WTC11 (cell line): ENCODE measurements at regions of chr15 and their contacts with region 1.

Region 1: DNA sequence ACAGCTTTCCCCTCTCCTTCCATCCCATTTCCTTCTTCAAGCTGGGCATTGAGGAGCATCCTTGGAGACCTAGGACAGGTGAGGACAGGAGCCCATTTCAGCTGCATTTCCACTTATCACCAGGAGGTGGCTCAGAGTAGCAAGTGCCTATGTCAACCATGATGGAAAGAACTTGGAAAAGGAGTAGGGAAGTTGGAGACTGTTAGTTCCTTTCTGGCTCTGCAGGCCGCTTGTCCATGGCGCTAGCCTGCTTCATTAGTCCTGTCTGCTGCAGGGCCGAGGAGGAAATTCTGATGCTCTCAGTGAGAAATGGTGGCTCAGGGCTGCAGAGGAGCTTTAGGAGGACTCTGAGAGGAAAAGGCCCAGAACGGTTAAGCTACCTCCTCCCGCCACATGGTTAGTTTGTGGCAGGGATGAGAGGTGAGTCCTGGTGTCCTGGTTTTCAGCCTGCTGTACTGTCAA is 7.0 kb upstream of the CD276 start:
- DNase-seq: peak; percentile 78
- ATAC-seq: peak; percentile 92
- H3K4me3 Mint-ChIP-seq: no peak overlapping the region
- H3K27ac Mint-ChIP-seq: no peak overlapping the region
- H3K4me1 Mint-ChIP-seq: peaks cover 12% of the 10 kb centered on the region
- H3K27me3 Mint-ChIP-seq: no peaks in the 10 kb centered on the region; the same call in 1 of the 2 replicates
- CTCF ChIP-seq: peak; percentile 70; the same call in 1 of the 2 replicates

Region 2: DNA sequence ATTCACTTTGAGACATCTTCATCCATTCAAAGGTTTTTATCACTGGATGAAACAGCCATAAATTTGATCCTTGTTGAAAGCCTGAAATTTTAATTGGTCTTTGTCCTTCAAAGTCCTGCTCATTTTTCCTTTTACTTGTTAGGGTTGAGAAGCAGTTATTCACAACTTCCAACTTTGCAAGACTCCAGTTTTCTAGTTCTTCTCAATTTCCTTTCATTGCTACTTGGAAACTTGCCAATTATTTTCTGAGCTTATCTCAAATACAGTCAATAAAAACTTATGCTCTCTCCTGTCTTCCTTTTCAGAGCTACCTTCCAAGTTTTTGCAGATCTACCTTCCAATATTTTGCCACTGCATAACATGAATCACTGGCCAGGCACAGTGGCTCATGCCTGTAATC is 16.7 kb before region 1 on chr15:
- CTCF ChIA-PET with region 1: interaction called, 11 read pairs
- POLR2A ChIA-PET with region 1: no interaction called
- DNase-seq: no peak
- ATAC-seq: no peak
- H3K4me3 Mint-ChIP-seq: no peak overlapping the region
- H3K27ac Mint-ChIP-seq: no peak overlapping the region
- H3K4me1 Mint-ChIP-seq: no peaks in the 10 kb centered on the region
- H3K27me3 Mint-ChIP-seq: no peaks in the 10 kb centered on the region; the same call in 1 of the 2 replicates
- CTCF ChIP-seq: no peak

Region 3: GRCh38 chr15:73691396-73691795 is 14.2 kb after region 1 on chr15:
- CTCF ChIA-PET with region 1: interaction called, 98 read pairs
- POLR2A ChIA-PET with region 1: no interaction called
- DNase-seq: peak; percentile 70
- ATAC-seq: peak; percentile 98
- H3K4me3 Mint-ChIP-seq: no peak overlapping the region
- H3K27ac Mint-ChIP-seq: no peak overlapping the region
- H3K4me1 Mint-ChIP-seq: peaks cover 43% of the 10 kb centered on the region
- H3K27me3 Mint-ChIP-seq: no peaks in the 10 kb centered on the region
- CTCF ChIP-seq: no peak

Region 4: DNA sequence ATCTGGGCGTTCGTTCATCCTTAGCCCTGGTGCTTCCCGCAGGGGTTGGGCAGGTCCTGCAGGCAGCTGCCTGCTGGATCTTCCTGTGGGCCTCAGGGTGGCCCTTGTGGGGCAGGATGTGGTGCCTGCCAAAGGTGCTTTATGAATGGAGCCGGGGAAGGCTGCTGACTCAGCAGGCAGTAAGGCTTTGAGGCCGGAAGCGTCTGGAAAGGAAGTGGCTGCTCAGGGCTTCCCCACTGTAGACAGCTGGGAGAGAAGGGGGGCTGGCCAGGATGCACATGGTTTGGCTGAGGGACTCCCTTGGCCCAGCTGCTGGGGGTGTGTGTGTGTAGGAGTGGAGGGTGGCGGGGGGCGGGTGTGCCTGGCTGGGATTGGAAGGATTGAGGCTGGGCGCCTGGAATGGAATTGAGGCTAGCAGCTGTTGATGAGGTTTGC is 19.9 kb after region 1 on chr15:
- CTCF ChIA-PET with region 1: interaction called, 98 read pairs
- POLR2A ChIA-PET with region 1: no interaction called
- DNase-seq: peak; percentile 54
- ATAC-seq: peak; percentile 63
- H3K4me3 Mint-ChIP-seq: no peak overlapping the region
- H3K27ac Mint-ChIP-seq: peak overlapping the region; percentile 73
- H3K4me1 Mint-ChIP-seq: peaks cover 66% of the 10 kb centered on the region
- H3K27me3 Mint-ChIP-seq: no peaks in the 10 kb centered on the region
- CTCF ChIP-seq: no peak

Region 5: GRCh38 chr15:73717802-73718201 is 40.6 kb after region 1 on chr15:
- CTCF ChIA-PET with region 1: interaction called, 19 read pairs
- POLR2A ChIA-PET with region 1: no interaction called
- DNase-seq: peak; percentile 49
- ATAC-seq: peak; percentile 62; the same call in 1 of the 2 replicates
- H3K4me3 Mint-ChIP-seq: no peak overlapping the region
- H3K27ac Mint-ChIP-seq: no peak overlapping the region
- H3K4me1 Mint-ChIP-seq: no peaks in the 10 kb centered on the region
- H3K27me3 Mint-ChIP-seq: no peaks in the 10 kb centered on the region; the same call in 1 of the 2 replicates
- CTCF ChIP-seq: peak; percentile 41